ENCODE measurements at regions of chr17 and their contacts with region 1.

Region 1: GRCh38 chr17:65556014-65556909 is 5.2 kb downstream of the AXIN2 start:
- DNase-seq: peak; percentile 81
- H3K4me3 ChIP-seq: no peak overlapping the region
- H3K27ac ChIP-seq: no peak overlapping the region
- H3K4me1 ChIP-seq: peaks cover 43% of the 10 kb centered on the region
- H3K27me3 ChIP-seq: no peaks in the 10 kb centered on the region
- CTCF ChIP-seq: peak; percentile 50 to 76 (median 58)
- POLR2A ChIP-seq: no peak

Region 2: GRCh38 chr17:65294179-65294720 is 262.0 kb before region 1 on chr17:
- intact Hi-C with region 1: loop called (anchors 10 kb)
- DNase-seq: peak; percentile 72
- H3K4me3 ChIP-seq: no peak overlapping the region
- H3K27ac ChIP-seq: no peak overlapping the region
- H3K4me1 ChIP-seq: no peaks in the 10 kb centered on the region
- H3K27me3 ChIP-seq: no peaks in the 10 kb centered on the region
- CTCF ChIP-seq: peak; percentile 30 to 69 (median 66)
- POLR2A ChIP-seq: no peak

Measured in testis (tissue), 5 donors.